ENCODE measurements at regions of chr14 and their contacts with region 1.

Region 1: DNA sequence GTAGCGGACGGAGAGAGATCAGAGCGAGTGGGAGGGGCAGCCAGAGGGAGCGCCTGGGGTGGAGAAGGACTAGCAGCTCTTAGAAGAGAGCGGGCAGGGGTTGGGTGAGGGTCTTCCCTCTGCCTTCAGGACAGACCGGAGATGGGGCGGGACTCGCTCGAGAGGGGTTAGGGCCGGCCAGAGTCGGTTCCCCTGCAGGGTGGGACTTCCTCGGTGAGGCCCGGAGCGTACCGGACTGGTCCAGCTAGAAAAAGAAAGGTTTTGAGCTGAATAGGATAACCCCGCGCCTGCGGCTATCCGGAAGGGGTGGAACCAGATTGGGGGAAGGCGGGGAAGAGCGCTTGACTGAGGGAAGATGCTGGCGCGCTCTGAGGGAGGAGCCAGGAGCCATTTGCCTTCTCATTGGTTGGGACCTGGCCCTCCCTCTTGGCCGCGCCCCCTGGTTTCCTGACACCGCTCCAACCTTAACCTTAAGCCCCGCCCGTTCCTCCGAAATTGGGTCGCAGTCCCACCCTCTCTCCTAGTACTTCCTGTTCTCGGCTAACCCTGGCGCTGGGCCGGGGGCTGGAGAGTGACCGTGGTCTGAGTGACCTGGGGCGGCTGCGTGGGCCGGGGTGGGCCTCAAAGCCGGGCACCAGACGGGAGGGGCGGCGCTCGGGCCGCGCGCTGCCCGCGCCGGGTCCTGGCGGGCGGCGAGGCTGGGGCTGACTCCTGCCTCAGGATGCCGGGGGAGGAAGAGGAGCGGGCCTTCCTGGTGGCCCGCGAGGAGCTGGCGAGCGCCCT is at the start of gene RNF31:
- DNase-seq: peak; percentile 100
- ATAC-seq: peak; percentile 90
- H3K4me3 ChIP-seq: peak within 1 kb of the TSS; percentile 91 to 100 (median 96)
- H3K27ac ChIP-seq: peak within 1 kb of the TSS; percentile 76
- H3K4me1 ChIP-seq: peaks cover 59% of the 10 kb centered on the region
- H3K27me3 ChIP-seq: peaks cover 0 to 3% of the 10 kb centered on the region in 2 experiments; a peak in 1 of 5 replicates
- CTCF ChIP-seq: no peak; the same call in 1 of the 2 replicates
- EP300 ChIP-seq: no peak
- POLR2A ChIP-seq: peak in 1 of 2 experiments; percentile 67; a peak in 2 of 4 replicates
- RAD21 ChIP-seq: peak; percentile 39
- total RNA-seq, gene RNF31: 65.9 and 86.8 TPM in 2 replicates

Region 2: GRCh38 chr14:24058260-24058950 is 88.8 kb before region 1 on chr14:
- CTCF ChIA-PET with region 1: no interaction called
- POLR2A ChIA-PET with region 1: interaction called, 11 read pairs
- in situ Hi-C with region 1: no loop called
- intact Hi-C with region 1: no loop called
- DNase-seq: peak; percentile 89
- ATAC-seq: peak; percentile 84
- H3K4me3 ChIP-seq: no peak overlapping the region
- H3K27ac ChIP-seq: no peak overlapping the region
- H3K4me1 ChIP-seq: peaks cover 40% of the 10 kb centered on the region
- H3K27me3 ChIP-seq: peaks cover 19 to 48% of the 10 kb centered on the region in 2 experiments; a peak in 4 of 5 replicates
- CTCF ChIP-seq: peak; percentile 99
- EP300 ChIP-seq: no peak
- POLR2A ChIP-seq: no peak
- RAD21 ChIP-seq: peak; percentile 99

Region 3: GRCh38 chr14:24123508-24124417 is 23.4 kb before region 1 on chr14:
- CTCF ChIA-PET with region 1: no interaction called
- POLR2A ChIA-PET with region 1: interaction called, 977 read pairs
- in situ Hi-C with region 1: no loop called
- intact Hi-C with region 1: no loop called
- DNase-seq: no peak
- ATAC-seq: peak; percentile 14
- H3K4me3 ChIP-seq: no peak overlapping the region
- H3K27ac ChIP-seq: no peak overlapping the region
- H3K4me1 ChIP-seq: peaks cover 5% of the 10 kb centered on the region; the same call in 1 of the 2 replicates
- H3K27me3 ChIP-seq: no peaks in the 10 kb centered on the region
- CTCF ChIP-seq: no peak
- EP300 ChIP-seq: no peak
- POLR2A ChIP-seq: no peak
- RAD21 ChIP-seq: no peak

Region 4: DNA sequence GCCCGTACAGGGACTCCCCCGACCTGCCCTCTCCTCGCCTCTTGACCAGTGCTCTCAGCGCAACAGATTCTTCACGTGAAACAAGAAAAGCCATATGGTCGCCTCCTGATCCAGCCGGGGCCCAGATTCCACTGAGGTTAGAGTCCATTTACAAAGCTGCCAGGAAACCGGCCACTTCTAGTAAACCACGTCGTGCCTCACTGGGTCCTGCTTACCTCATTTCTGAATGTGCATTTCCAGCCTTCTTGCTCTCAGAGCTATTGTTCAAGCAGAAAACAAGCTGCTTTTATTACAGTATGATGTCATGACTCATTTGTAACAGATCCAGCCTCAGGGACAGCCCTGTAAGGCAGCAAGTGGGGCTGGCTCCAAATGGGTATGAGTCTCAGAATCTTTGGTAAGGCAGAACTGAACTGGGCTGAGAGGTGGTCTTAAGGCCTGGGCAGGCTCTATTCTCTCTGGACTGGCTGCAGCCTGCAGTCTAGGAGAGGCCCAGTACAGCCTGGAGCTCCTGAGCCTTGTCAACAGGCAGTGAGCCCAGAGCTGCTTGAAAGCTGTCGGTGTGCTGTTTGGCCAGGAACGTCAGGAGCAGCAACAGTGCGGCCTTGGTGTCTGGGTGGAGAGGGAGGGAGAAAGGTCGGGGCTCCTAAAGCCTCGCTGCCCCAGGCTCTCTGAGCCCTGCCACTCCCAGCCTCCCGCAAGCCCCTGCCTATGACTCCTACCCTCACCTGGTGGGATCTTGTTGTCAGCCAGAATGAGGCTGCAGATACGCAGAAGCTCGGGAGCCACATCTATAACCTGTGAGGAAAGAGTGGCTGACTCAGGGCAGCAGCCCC is 33.0 kb after region 1 on chr14:
- CTCF ChIA-PET with region 1: no interaction called
- POLR2A ChIA-PET with region 1: interaction called, 29 read pairs
- in situ Hi-C with region 1: no loop called
- intact Hi-C with region 1: no loop called
- DNase-seq: no peak
- ATAC-seq: no peak
- H3K4me3 ChIP-seq: no peak overlapping the region
- H3K27ac ChIP-seq: no peak overlapping the region
- H3K4me1 ChIP-seq: no peaks in the 10 kb centered on the region
- H3K27me3 ChIP-seq: no peaks in the 10 kb centered on the region
- CTCF ChIP-seq: no peak
- EP300 ChIP-seq: no peak
- POLR2A ChIP-seq: no peak
- RAD21 ChIP-seq: no peak

Region 5: GRCh38 chr14:24215495-24216344 is 68.6 kb after region 1 on chr14 and contains the start of gene MDP1:
- CTCF ChIA-PET with region 1: no interaction called
- POLR2A ChIA-PET with region 1: interaction called, 63 read pairs
- in situ Hi-C with region 1: no loop called
- intact Hi-C with region 1: no loop called
- DNase-seq: peak; percentile 95
- ATAC-seq: peak; percentile 81
- H3K4me3 ChIP-seq: peak within 1 kb of the TSS; percentile 67 to 98 (median 81)
- H3K27ac ChIP-seq: peak within 1 kb of the TSS; percentile 72
- H3K4me1 ChIP-seq: peaks cover 39% of the 10 kb centered on the region
- H3K27me3 ChIP-seq: no peaks in the 10 kb centered on the region; a peak in 1 of 5 replicates
- CTCF ChIP-seq: peak; percentile 100
- EP300 ChIP-seq: peak in 1 of 2 experiments; percentile 74; a peak in 3 of 4 replicates
- POLR2A ChIP-seq: peak in 1 of 2 experiments; percentile 97; a peak in 2 of 4 replicates
- RAD21 ChIP-seq: peak; percentile 96
- total RNA-seq, gene MDP1: 48.7 and 66.0 TPM in 2 replicates

Measured in HepG2 (cell line).